ENCODE measurements at regions of chr11 and their contacts with region 1.

Region 1: DNA sequence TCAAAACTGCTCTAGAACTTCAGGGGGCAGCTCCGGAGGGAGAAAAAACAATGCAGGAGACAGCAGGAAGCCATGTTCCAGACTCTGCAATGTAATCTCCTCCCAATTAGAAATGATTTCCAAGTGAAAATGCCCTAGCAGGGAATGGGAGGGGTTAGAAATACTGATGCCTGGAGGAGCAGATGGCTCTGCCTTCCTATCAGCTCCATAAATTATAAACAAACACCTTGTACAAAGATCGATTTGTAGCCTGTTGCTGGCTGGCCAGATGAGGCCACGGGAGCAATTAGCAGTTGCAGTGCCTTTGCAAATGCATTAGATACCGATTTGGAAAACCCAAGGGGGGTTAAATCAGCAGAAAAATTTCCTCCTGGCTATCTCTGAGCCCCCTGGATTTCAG is 46.6 kb upstream of the CHRM4 start:
- DNase-seq: no peak
- H3K4me3 ChIP-seq: no peak overlapping the region
- H3K27ac ChIP-seq: no peak overlapping the region
- H3K4me1 ChIP-seq: peaks cover 12% of the 10 kb centered on the region
- H3K27me3 ChIP-seq: no peaks in the 10 kb centered on the region
- CTCF ChIP-seq: no peak

Region 2: GRCh38 chr11:45267052-45267451 is 1171.2 kb before region 1 on chr11:
- CTCF ChIA-PET with region 1: no interaction called
- POLR2A ChIA-PET with region 1: no interaction called
- intact Hi-C with region 1: no loop called
- DNase-seq: peak; percentile 66
- H3K4me3 ChIP-seq: no peak overlapping the region
- H3K27ac ChIP-seq: no peak overlapping the region
- H3K4me1 ChIP-seq: no peaks in the 10 kb centered on the region
- H3K27me3 ChIP-seq: peaks cover 29% of the 10 kb centered on the region
- CTCF ChIP-seq: peak; percentile 95

Region 3: GRCh38 chr11:45993531-45994001 is 444.6 kb before region 1 on chr11:
- CTCF ChIA-PET with region 1: no interaction called
- POLR2A ChIA-PET with region 1: interaction called, 12 read pairs
- intact Hi-C with region 1: no loop called
- DNase-seq: no peak
- H3K4me3 ChIP-seq: no peak overlapping the region
- H3K27ac ChIP-seq: no peak overlapping the region
- H3K4me1 ChIP-seq: peaks cover 19% of the 10 kb centered on the region
- H3K27me3 ChIP-seq: no peaks in the 10 kb centered on the region
- CTCF ChIP-seq: no peak